ENCODE measurements at regions of chr14 and their contacts with region 1.

Region 1: DNA sequence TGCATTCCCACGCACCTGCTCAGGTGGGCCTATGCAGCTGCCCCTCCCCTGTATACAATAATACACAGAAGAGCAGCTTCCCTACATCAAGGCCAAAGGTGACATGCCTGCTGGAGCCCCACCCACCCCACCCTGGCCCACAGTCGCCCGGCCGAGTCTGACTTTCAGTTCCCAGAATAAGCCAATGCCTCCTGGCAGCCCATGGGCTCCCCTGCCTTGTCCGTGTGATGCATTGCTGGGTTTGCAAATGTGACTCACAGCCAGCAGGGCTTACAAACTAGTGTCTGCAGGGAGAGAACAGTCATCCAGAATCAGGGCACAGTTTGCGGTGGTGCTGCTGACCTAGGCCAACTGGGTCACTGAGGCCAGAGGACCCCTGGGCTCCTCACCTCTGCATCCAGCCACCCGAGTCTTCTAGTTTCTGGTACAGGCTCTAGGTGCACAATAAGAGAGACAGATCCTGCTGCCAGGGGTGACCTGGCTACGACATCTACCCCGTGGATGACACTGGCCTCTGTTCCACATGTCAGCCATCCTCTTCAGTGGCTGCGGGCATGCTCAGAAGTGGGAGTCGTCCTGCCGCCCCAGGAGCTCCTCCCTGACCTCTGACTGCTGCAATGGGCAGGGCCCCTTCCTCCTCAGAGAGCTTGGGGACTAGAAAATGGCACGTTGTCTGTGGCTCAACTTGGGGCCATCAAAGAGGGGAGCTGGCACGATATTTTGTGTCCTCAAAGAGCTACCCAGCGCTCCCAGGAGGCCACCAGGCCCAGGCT is 84.5 kb downstream of the CHGA start:
- DNase-seq: peak in 3 of 10 donors; percentile 58 to 77 (median 76)

Region 2: GRCh38 chr14:92973261-92973797 is 34.1 kb before region 1 on chr14:
- intact Hi-C with region 1: loop called (anchors 5 kb)
- DNase-seq: peak; percentile 71 to 97 (median 85)

Region 3: GRCh38 chr14:93035917-93036651 is 28.7 kb after region 1 on chr14:
- intact Hi-C with region 1: loop called (anchors 1 kb)
- DNase-seq: peak; percentile 79 to 98 (median 90)

Measured in posterior cingulate gyrus (tissue), 11 donors.